ENCODE measurements at regions of chr6 and their contacts with region 1.

Region 1: GRCh38 chr6:37257634-37258404 is at the starts of genes TBC1D22B and TMEM217:
- DNase-seq: peak; percentile 57 to 97
- H3K4me3 ChIP-seq: peak within 1 kb of the TSS; percentile 95
- H3K27ac ChIP-seq: peak within 1 kb of the TSS; percentile 75
- H3K4me1 ChIP-seq: peaks cover 25% of the 10 kb centered on the region; the same call in 1 of the 2 replicates
- H3K27me3 ChIP-seq: no peaks in the 10 kb centered on the region
- CTCF ChIP-seq: no peak
- total RNA-seq, gene TBC1D22B: 10.4 and 14.6 TPM in 2 replicates
- total RNA-seq, gene TMEM217: 4.9 and 5.3 TPM in 2 replicates

Region 2: GRCh38 chr6:36885461-36886401 is 372.1 kb before region 1 on chr6 and contains the start of gene C6orf89:
- CTCF ChIA-PET with region 1: no interaction called
- POLR2A ChIA-PET with region 1: no interaction called
- intact Hi-C with region 1: no loop called
- DNase-seq: peak; percentile 91 to 92
- H3K4me3 ChIP-seq: peak within 1 kb of the TSS; percentile 67
- H3K27ac ChIP-seq: peak within 1 kb of the TSS; percentile 61
- H3K4me1 ChIP-seq: peaks cover 19% of the 10 kb centered on the region
- H3K27me3 ChIP-seq: no peaks in the 10 kb centered on the region
- CTCF ChIP-seq: peak; percentile 75
- total RNA-seq, gene C6orf89: 28.7 and 40.1 TPM in 2 replicates

Region 3: GRCh38 chr6:37212268-37212667 is 45.6 kb before region 1 on chr6:
- CTCF ChIA-PET with region 1: no interaction called
- POLR2A ChIA-PET with region 1: no interaction called
- intact Hi-C with region 1: no loop called
- DNase-seq: no peak
- H3K4me3 ChIP-seq: no peak overlapping the region
- H3K27ac ChIP-seq: no peak overlapping the region
- H3K4me1 ChIP-seq: peaks cover 12% of the 10 kb centered on the region
- H3K27me3 ChIP-seq: no peaks in the 10 kb centered on the region
- CTCF ChIP-seq: no peak

Region 4: DNA sequence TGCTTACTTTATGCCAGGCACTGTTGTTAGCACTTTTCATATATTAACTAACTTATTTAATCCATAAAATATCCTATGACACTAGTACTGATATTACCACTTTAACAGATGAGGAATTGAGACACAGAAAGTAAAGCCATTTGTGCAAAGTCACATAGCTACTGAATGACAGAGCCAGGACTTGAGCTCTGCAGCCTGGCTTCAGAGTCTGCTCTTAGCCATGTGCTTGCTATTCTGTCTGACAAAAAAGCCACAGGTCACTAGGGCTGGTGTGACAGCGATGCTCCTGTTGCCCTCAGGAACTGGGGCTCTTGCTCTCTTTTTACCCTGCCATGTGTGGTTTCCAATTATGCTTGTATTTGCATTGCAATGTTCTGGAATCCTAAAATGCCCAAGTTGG is 51.2 kb after region 1 on chr6:
- CTCF ChIA-PET with region 1: no interaction called
- POLR2A ChIA-PET with region 1: interaction called, 23 read pairs
- intact Hi-C with region 1: no loop called
- DNase-seq: no peak
- H3K4me3 ChIP-seq: no peak overlapping the region
- H3K27ac ChIP-seq: no peak overlapping the region
- H3K4me1 ChIP-seq: no peaks in the 10 kb centered on the region
- H3K27me3 ChIP-seq: no peaks in the 10 kb centered on the region
- CTCF ChIP-seq: no peak

Region 5: GRCh38 chr6:37391120-37391519 is 133.3 kb after region 1 on chr6:
- CTCF ChIA-PET with region 1: no interaction called
- POLR2A ChIA-PET with region 1: no interaction called
- intact Hi-C with region 1: no loop called
- DNase-seq: no peak
- H3K4me3 ChIP-seq: no peak overlapping the region
- H3K27ac ChIP-seq: no peak overlapping the region
- H3K4me1 ChIP-seq: no peaks in the 10 kb centered on the region
- H3K27me3 ChIP-seq: no peaks in the 10 kb centered on the region
- CTCF ChIP-seq: no peak